ENCODE measurements at regions of chr18 and their contacts with region 1.

Region 1: GRCh38 chr18:30298769-30299168 is 743.8 kb downstream of the DSC3 start:
- DNase-seq: no peak
- ATAC-seq: no peak
- H3K4me3 ChIP-seq: no peak overlapping the region
- H3K27ac ChIP-seq: no peak overlapping the region
- H3K4me1 ChIP-seq: no peaks in the 10 kb centered on the region
- H3K27me3 ChIP-seq: no peaks in the 10 kb centered on the region

Region 2: GRCh38 chr18:30358555-30358954 is 59.8 kb after region 1 on chr18:
- intact Hi-C with region 1: loop called in 1 of 2 experiments (anchors 10 kb)
- DNase-seq: no peak
- ATAC-seq: no peak
- H3K4me3 ChIP-seq: no peak overlapping the region
- H3K27ac ChIP-seq: no peak overlapping the region
- H3K4me1 ChIP-seq: no peaks in the 10 kb centered on the region
- H3K27me3 ChIP-seq: no peaks in the 10 kb centered on the region